Psoas muscle (tissue), 8 donors: ENCODE measurements at regions of chr1 and their contacts with region 1.

Region 1: DNA sequence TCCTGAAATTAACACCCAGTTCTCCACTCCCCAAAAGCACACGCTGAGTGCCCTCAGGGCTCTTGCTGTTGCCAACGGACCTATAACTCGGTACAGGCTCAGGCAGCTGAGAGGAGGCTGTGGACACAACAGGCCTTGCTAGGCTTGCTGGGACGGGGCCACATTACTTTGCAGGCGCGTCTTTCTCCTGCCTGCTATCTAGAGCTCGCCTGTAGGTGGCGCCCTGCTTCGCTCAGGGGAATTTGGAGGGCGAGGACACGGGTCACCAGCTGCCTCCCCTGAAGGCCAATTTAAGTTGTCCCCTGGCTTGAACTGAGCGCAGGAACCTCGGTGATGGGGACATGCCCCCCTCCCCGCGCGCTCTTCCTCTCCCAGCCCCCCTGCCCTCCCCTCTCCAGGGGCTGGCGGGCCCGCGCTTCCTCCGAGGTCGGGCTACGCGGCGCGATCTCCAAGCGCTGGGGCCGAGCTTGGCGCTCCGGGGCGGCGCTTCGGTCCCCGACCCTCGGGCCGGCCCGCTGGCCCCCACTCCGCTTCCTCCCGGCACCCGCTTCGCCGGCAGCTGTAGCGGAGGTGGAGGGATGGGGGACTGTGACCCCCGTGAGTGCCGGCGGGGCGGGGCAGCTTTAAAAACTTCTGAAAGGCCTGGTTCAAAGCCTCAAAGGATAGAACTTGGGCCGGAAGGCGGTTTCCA is 32.4 kb upstream of the NFIA start:
- DNase-seq: peak; percentile 95 to 97
- ATAC-seq: peak; percentile 77 to 86 (median 84)
- H3K4me3 ChIP-seq: peak overlapping the region; percentile 79
- H3K27ac ChIP-seq: peak overlapping the region; percentile 97
- H3K4me1 ChIP-seq: peaks cover 23% of the 10 kb centered on the region
- H3K27me3 ChIP-seq: no peaks in the 10 kb centered on the region
- CTCF ChIP-seq: peak; percentile 97

Region 2: GRCh38 chr1:60281360-60281932 is 768.5 kb before region 1 on chr1:
- intact Hi-C with region 1: loop called in 1 of 2 experiments (anchors 10 kb)
- DNase-seq: peak; percentile 35 to 54
- ATAC-seq: peak; percentile 85 to 96 (median 88)
- H3K4me3 ChIP-seq: no peak overlapping the region
- H3K27ac ChIP-seq: no peak overlapping the region
- H3K4me1 ChIP-seq: no peaks in the 10 kb centered on the region
- H3K27me3 ChIP-seq: no peaks in the 10 kb centered on the region
- CTCF ChIP-seq: peak; percentile 84

Region 3: DNA sequence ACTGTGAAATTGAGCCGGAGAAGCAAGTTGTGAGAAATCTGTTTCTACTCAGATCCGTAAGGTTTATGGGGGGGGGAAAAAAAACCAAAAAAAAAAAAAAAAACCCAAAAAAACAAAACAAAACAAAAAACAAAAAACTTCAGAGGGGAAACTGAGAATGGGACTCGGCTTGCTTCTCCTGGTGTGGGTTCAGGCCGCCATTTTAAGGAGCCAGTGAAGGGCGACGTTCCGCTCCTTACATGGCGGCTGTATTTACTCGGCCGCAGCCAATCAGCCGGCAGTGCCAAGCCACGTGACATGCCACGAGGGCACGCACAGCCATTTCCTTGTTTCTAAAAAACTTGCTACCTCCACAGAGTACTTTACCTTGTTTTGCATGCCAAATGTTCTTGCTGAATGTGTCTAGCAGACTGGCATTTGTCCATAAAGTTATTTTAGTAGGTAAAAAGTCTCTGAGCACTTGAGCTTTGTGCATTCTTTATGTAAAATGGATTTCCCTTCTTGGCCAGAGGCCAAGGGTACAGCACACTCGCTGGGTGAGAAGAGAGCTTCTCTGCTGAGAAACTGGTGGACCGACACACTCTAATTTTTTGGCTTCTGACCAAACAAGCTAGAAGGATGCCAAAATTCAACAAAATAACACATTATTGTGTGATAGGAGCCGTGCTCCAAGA is 134.2 kb after region 1 on chr1:
- intact Hi-C with region 1: loop called in 1 of 2 experiments (anchors 5 kb)
- DNase-seq: peak; percentile 93 to 97
- ATAC-seq: peak; percentile 89 to 94 (median 90)
- H3K4me3 ChIP-seq: peak overlapping the region; percentile 66
- H3K27ac ChIP-seq: peak overlapping the region; percentile 94
- H3K4me1 ChIP-seq: peaks cover 71% of the 10 kb centered on the region
- H3K27me3 ChIP-seq: no peaks in the 10 kb centered on the region
- CTCF ChIP-seq: no peak

Region 4: GRCh38 chr1:61588736-61589672 is 539.0 kb after region 1 on chr1:
- intact Hi-C with region 1: loop called in 1 of 2 experiments (anchors 10 kb)
- DNase-seq: peak; percentile 28 to 61
- ATAC-seq: peak; percentile 61 to 89 (median 80)
- H3K4me3 ChIP-seq: no peak overlapping the region
- H3K27ac ChIP-seq: no peak overlapping the region
- H3K4me1 ChIP-seq: no peaks in the 10 kb centered on the region
- H3K27me3 ChIP-seq: no peaks in the 10 kb centered on the region
- CTCF ChIP-seq: peak; percentile 70

Region 5: GRCh38 chr1:61724813-61725694 is 675.1 kb after region 1 on chr1 and contains the start of gene TM2D1:
- intact Hi-C with region 1: loop called in 1 of 2 experiments (anchors 10 kb)
- DNase-seq: peak; percentile 89 to 95
- ATAC-seq: peak; percentile 99
- H3K4me3 ChIP-seq: peak within 1 kb of the TSS; percentile 96
- H3K27ac ChIP-seq: peak within 1 kb of the TSS; percentile 95
- H3K4me1 ChIP-seq: peaks cover 17% of the 10 kb centered on the region
- H3K27me3 ChIP-seq: no peaks in the 10 kb centered on the region
- CTCF ChIP-seq: no peak
- total RNA-seq, gene TM2D1: 29.5 to 36.8 (median 33.2) TPM